CD4-positive, alpha-beta T cell (primary cell): ENCODE measurements at regions of chr3 and their contacts with region 1.

Region 1: GRCh38 chr3:42831321-42831713 is 22.1 kb downstream of the ACKR2 start:
- DNase-seq: peak; percentile 56 to 83 (median 66)
- ATAC-seq: peak; percentile 55
- H3K4me3 ChIP-seq: no peak overlapping the region
- H3K4me3 Mint-ChIP-seq: no peak overlapping the region
- H3K27ac ChIP-seq: no peak overlapping the region
- H3K27ac Mint-ChIP-seq: no peak overlapping the region
- H3K4me1 ChIP-seq: peaks cover 4% of the 10 kb centered on the region
- H3K4me1 Mint-ChIP-seq: peaks cover 6% of the 10 kb centered on the region
- H3K27me3 ChIP-seq: peaks cover 3% of the 10 kb centered on the region in 2 experiments
- H3K27me3 Mint-ChIP-seq: peaks cover 11% of the 10 kb centered on the region
- CTCF ChIP-seq: peak; percentile 81

Region 2: DNA sequence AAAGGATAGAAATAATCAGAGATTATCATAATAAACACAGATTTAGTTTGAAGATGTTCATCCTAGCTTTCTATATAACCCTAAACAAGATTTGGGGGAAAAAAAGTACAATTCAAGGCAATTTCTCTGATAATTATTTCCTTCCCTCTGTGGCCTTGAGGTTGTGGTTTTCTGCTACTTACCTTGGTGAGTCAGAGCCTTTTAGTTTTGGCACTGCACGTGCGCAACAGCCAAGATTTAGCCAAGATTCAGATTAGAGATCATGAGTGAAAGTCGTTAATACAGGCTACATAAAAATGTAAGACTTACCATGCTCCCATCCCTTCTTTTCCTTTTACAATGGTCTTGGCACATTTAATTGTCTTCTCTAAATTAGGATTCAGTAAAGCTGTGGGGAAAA is 427.6 kb before region 1 on chr3:
- CTCF ChIA-PET with region 1: no interaction called
- POLR2A ChIA-PET with region 1: no interaction called
- intact Hi-C with region 1: no loop called
- DNase-seq: no peak
- ATAC-seq: no peak
- H3K4me3 ChIP-seq: no peak overlapping the region
- H3K4me3 Mint-ChIP-seq: no peak overlapping the region
- H3K27ac ChIP-seq: no peak overlapping the region
- H3K27ac Mint-ChIP-seq: no peak overlapping the region
- H3K4me1 ChIP-seq: no peaks in the 10 kb centered on the region
- H3K4me1 Mint-ChIP-seq: peaks cover 9% of the 10 kb centered on the region
- H3K27me3 ChIP-seq: no peaks in the 10 kb centered on the region
- H3K27me3 Mint-ChIP-seq: no peaks in the 10 kb centered on the region
- CTCF ChIP-seq: no peak

Region 3: GRCh38 chr3:42880601-42881451 is 49.5 kb after region 1 on chr3:
- CTCF ChIA-PET with region 1: interaction called, 13 read pairs
- POLR2A ChIA-PET with region 1: interaction called, 5 read pairs
- intact Hi-C with region 1: loop called (anchors 2 kb)
- DNase-seq: peak; percentile 73 to 94 (median 84)
- ATAC-seq: peak; percentile 98
- H3K4me3 ChIP-seq: peak overlapping the region; percentile 78
- H3K4me3 Mint-ChIP-seq: peak overlapping the region; percentile 78
- H3K27ac ChIP-seq: peak overlapping the region; percentile 13 to 46
- H3K27ac Mint-ChIP-seq: peak overlapping the region; percentile 69
- H3K4me1 ChIP-seq: peaks cover 15% of the 10 kb centered on the region
- H3K4me1 Mint-ChIP-seq: peaks cover 17% of the 10 kb centered on the region
- H3K27me3 ChIP-seq: peaks cover 0 to 6% of the 10 kb centered on the region in 2 experiments
- H3K27me3 Mint-ChIP-seq: no peaks in the 10 kb centered on the region
- CTCF ChIP-seq: peak; percentile 89

Region 4: DNA sequence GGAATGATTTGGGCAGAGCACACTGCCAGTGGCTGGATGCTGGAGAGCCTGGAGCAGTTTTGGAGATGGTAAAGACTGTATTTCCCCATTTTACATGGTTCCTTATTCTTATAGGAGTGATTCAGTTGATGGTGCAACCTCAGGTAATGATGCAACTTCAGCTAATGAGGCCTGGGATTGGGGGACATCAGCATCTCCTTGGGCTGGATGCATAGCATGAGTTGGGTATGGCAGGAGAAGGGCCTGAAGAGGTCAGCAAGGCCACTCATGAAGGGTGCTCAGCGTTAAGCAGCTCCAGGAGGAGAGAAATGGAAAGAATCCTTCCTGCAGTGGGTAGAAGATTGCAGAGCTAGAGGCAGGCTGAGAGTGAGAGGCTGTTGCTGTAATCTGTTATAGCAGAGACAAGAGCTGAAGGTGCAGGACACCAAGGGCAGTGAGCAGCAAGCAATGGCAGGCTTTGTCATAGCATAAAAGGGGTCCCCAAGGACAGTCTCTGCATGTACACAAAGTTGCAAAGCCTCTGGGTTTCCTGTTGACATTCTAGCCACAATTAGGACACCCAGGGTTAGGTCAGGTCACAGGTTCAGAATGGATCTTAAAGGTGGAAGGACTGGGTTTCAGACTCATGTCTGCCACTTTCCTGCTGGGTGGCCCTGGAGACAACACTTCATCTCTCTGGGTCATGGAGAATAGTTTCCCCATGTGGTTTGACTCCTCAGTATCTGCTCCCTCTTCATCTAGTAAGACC is 425.6 kb after region 1 on chr3:
- CTCF ChIA-PET with region 1: no interaction called
- POLR2A ChIA-PET with region 1: no interaction called
- intact Hi-C with region 1: no loop called
- DNase-seq: peak in 3 of 14 experiments; percentile 21 to 61 (median 59)
- ATAC-seq: no peak
- H3K4me3 ChIP-seq: no peak overlapping the region
- H3K4me3 Mint-ChIP-seq: no peak overlapping the region
- H3K27ac ChIP-seq: no peak overlapping the region
- H3K27ac Mint-ChIP-seq: no peak overlapping the region
- H3K4me1 ChIP-seq: peaks cover 25% of the 10 kb centered on the region
- H3K4me1 Mint-ChIP-seq: peaks cover 32% of the 10 kb centered on the region
- H3K27me3 ChIP-seq: no peaks in the 10 kb centered on the region
- H3K27me3 Mint-ChIP-seq: no peaks in the 10 kb centered on the region
- CTCF ChIP-seq: no peak